ENCODE measurements at regions of chr15 and their contacts with region 1.

Region 1: GRCh38 chr15:47870956-47871625 is 153.8 kb downstream of the SEMA6D start:
- DNase-seq: no peak
- H3K4me3 ChIP-seq: no peak overlapping the region
- H3K27ac ChIP-seq: peak overlapping the region; percentile 58 to 65
- H3K4me1 ChIP-seq: peaks cover 0 to 41% (median 33%) of the 10 kb centered on the region in 4 donors
- H3K27me3 ChIP-seq: no peaks in the 10 kb centered on the region
- CTCF ChIP-seq: no peak

Region 2: DNA sequence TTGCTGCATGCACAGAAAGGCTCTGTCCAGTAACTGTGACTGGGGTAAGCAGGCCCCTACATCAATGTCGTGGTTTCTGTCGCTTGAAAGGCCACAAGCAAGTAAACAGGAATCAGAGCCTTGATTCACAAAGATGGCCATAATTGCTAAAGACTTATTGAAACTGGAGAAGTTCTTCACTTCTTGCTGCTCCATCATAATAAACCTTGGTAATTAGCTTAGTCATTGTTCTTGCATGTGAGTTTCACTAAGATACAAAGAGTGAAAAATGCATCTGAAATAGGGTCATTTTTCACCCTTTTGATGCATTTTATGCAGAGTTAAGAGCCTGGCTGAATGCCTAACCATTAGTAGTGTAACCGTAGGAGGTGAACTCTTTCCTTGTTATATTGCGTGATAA is 150.5 kb before region 1 on chr15:
- intact Hi-C with region 1: loop called (anchors 5 kb)
- DNase-seq: no peak
- H3K4me3 ChIP-seq: no peak overlapping the region
- H3K27ac ChIP-seq: peak overlapping the region; percentile 7 to 92
- H3K4me1 ChIP-seq: peaks cover 0 to 64% (median 21%) of the 10 kb centered on the region in 4 donors
- H3K27me3 ChIP-seq: no peaks in the 10 kb centered on the region
- CTCF ChIP-seq: no peak

Region 3: GRCh38 chr15:48336940-48337339 is 465.8 kb after region 1 on chr15:
- intact Hi-C with region 1: no loop called
- DNase-seq: no peak
- H3K4me3 ChIP-seq: no peak overlapping the region
- H3K27ac ChIP-seq: no peak overlapping the region
- H3K4me1 ChIP-seq: peaks cover 3 to 8% (median 6%) of the 10 kb centered on the region in 4 donors
- H3K27me3 ChIP-seq: no peaks in the 10 kb centered on the region
- CTCF ChIP-seq: no peak